ENCODE measurements at regions of chr15 and their contacts with region 1.

Region 1: GRCh38 chr15:88701561-88702095 is 62.8 kb downstream of the ISG20 start:
- DNase-seq: no peak
- H3K4me3 ChIP-seq: no peak overlapping the region
- CTCF ChIP-seq: no peak
- POLR2A ChIP-seq: no peak

Region 2: GRCh38 chr15:88681610-88682221 is 19.9 kb before region 1 on chr15:
- intact Hi-C with region 1: loop called (anchors 1 kb)
- DNase-seq: no peak
- H3K4me3 ChIP-seq: no peak overlapping the region
- CTCF ChIP-seq: no peak
- POLR2A ChIP-seq: no peak

Measured in lower leg skin (tissue), 4 donors.